IMR-90 (cell line): ENCODE measurements at regions of chr1 and their contacts with region 1.

Region 1: GRCh38 chr1:56484695-56485094 is 94.7 kb downstream of the PLPP3 start:
- DNase-seq: no peak
- ATAC-seq: no peak
- H3K4me3 ChIP-seq: no peak overlapping the region
- H3K27ac ChIP-seq: no peak overlapping the region
- H3K4me1 ChIP-seq: no peaks in the 10 kb centered on the region
- H3K27me3 ChIP-seq: no peaks in the 10 kb centered on the region
- CTCF ChIP-seq: no peak
- POLR2A ChIP-seq: no peak
- RAD21 ChIP-seq: no peak

Region 2: GRCh38 chr1:55718758-55719671 is 765.7 kb before region 1 on chr1:
- CTCF ChIA-PET with region 1: no interaction called
- POLR2A ChIA-PET with region 1: no interaction called
- dilution Hi-C with region 1: no loop called
- in situ Hi-C with region 1: no loop called
- intact Hi-C with region 1: loop called (anchors 10 kb)
- DNase-seq: peak; percentile 100
- ATAC-seq: peak; percentile 75
- H3K4me3 ChIP-seq: no peak overlapping the region
- H3K27ac ChIP-seq: peak overlapping the region; percentile 97
- H3K4me1 ChIP-seq: peaks cover 31% of the 10 kb centered on the region
- H3K27me3 ChIP-seq: no peaks in the 10 kb centered on the region
- CTCF ChIP-seq: no peak
- POLR2A ChIP-seq: peak; percentile 54; the same call in 1 of the 2 replicates
- RAD21 ChIP-seq: peak; percentile 38

Region 3: DNA sequence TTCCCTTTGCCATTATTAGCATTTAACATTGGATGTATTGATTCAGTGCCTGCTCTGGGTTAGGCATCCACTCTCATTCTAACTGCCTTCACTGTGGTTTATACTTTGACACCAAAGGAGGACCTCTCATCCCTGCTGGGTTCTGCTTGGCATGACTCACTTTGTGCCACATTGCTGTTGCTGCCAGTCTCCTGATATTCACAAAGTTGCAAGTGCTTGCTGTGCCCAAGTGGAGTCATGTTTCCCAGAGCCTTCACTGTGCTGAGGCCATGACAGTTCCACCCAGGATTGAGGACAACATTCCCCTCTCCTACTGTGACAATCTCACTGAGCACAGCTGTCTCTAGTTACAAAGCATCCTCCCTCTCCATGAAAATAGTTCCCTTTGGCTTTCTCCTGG is 749.6 kb before region 1 on chr1:
- CTCF ChIA-PET with region 1: no interaction called
- POLR2A ChIA-PET with region 1: no interaction called
- dilution Hi-C with region 1: no loop called
- in situ Hi-C with region 1: no loop called
- intact Hi-C with region 1: no loop called
- DNase-seq: no peak
- ATAC-seq: peak; percentile 56
- H3K4me3 ChIP-seq: no peak overlapping the region
- H3K27ac ChIP-seq: peak overlapping the region; percentile 41; the same call in 1 of the 2 replicates
- H3K4me1 ChIP-seq: peaks cover 3% of the 10 kb centered on the region; the same call in 1 of the 2 replicates
- H3K27me3 ChIP-seq: no peaks in the 10 kb centered on the region
- CTCF ChIP-seq: no peak
- POLR2A ChIP-seq: no peak
- RAD21 ChIP-seq: no peak

Region 4: GRCh38 chr1:56064705-56065104 is 420.0 kb before region 1 on chr1:
- CTCF ChIA-PET with region 1: no interaction called
- POLR2A ChIA-PET with region 1: no interaction called
- dilution Hi-C with region 1: no loop called
- in situ Hi-C with region 1: no loop called
- intact Hi-C with region 1: loop called (anchors 10 kb)
- DNase-seq: peak; percentile 61
- ATAC-seq: no peak; the same call in 1 of the 2 replicates
- H3K4me3 ChIP-seq: no peak overlapping the region
- H3K27ac ChIP-seq: no peak overlapping the region
- H3K4me1 ChIP-seq: peaks cover 11% of the 10 kb centered on the region
- H3K27me3 ChIP-seq: no peaks in the 10 kb centered on the region
- CTCF ChIP-seq: no peak
- POLR2A ChIP-seq: no peak
- RAD21 ChIP-seq: no peak

Region 5: GRCh38 chr1:56189946-56190792 is 294.5 kb before region 1 on chr1:
- CTCF ChIA-PET with region 1: no interaction called
- POLR2A ChIA-PET with region 1: no interaction called
- dilution Hi-C with region 1: no loop called
- in situ Hi-C with region 1: no loop called
- intact Hi-C with region 1: loop called (anchors 10 kb)
- DNase-seq: no peak
- ATAC-seq: no peak
- H3K4me3 ChIP-seq: no peak overlapping the region
- H3K27ac ChIP-seq: no peak overlapping the region
- H3K4me1 ChIP-seq: peaks cover 8% of the 10 kb centered on the region
- H3K27me3 ChIP-seq: no peaks in the 10 kb centered on the region; the same call in 1 of the 2 replicates
- CTCF ChIP-seq: 0 out of 2 replicates have a peak, but pooled peaks have one; percentile 8
- POLR2A ChIP-seq: no peak
- RAD21 ChIP-seq: no peak

Region 6: DNA sequence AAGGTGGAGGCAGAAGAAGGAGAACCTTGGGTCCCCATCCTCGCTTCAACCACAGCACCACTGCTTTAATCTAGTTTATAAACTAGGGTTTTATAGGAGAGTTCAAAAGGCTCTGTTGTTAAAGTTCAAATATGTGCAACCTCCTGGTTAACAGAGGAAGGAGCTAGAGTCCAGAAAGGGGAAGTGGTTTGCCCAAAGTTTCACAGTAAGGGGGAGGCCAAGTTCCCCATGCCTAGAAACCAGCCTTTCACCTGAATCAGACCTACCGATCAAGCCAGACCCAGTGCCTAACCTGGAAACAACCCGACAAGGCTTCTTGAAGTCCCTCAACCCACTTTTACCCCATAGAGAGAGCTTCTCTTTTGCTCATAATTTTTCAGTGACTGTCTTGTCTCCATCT is 11.8 kb before region 1 on chr1:
- CTCF ChIA-PET with region 1: no interaction called
- POLR2A ChIA-PET with region 1: no interaction called
- dilution Hi-C with region 1: no loop called
- in situ Hi-C with region 1: no loop called
- intact Hi-C with region 1: no loop called
- DNase-seq: no peak
- ATAC-seq: no peak
- H3K4me3 ChIP-seq: no peak overlapping the region
- H3K27ac ChIP-seq: no peak overlapping the region
- H3K4me1 ChIP-seq: peaks cover 4% of the 10 kb centered on the region; the same call in 1 of the 2 replicates
- H3K27me3 ChIP-seq: no peaks in the 10 kb centered on the region; the same call in 1 of the 2 replicates
- CTCF ChIP-seq: no peak
- POLR2A ChIP-seq: no peak
- RAD21 ChIP-seq: no peak

Region 7: GRCh38 chr1:56644919-56645676 is 160.4 kb after region 1 on chr1 and contains the start of gene PRKAA2:
- CTCF ChIA-PET with region 1: no interaction called
- POLR2A ChIA-PET with region 1: no interaction called
- dilution Hi-C with region 1: no loop called
- in situ Hi-C with region 1: no loop called
- intact Hi-C with region 1: no loop called
- DNase-seq: peak; percentile 12
- ATAC-seq: peak; percentile 88
- H3K4me3 ChIP-seq: peak within 1 kb of the TSS; percentile 92
- H3K27ac ChIP-seq: peak within 1 kb of the TSS; percentile 42
- H3K4me1 ChIP-seq: peaks cover 2% of the 10 kb centered on the region; the same call in 1 of the 2 replicates
- H3K27me3 ChIP-seq: no peaks in the 10 kb centered on the region
- CTCF ChIP-seq: no peak
- POLR2A ChIP-seq: no peak
- RAD21 ChIP-seq: no peak
- total RNA-seq, gene PRKAA2: 1.4 and 2.2 TPM in 2 replicates